GM13976 (cell line): ENCODE measurements at regions of chr11 and their contacts with region 1.

Region 1: DNA sequence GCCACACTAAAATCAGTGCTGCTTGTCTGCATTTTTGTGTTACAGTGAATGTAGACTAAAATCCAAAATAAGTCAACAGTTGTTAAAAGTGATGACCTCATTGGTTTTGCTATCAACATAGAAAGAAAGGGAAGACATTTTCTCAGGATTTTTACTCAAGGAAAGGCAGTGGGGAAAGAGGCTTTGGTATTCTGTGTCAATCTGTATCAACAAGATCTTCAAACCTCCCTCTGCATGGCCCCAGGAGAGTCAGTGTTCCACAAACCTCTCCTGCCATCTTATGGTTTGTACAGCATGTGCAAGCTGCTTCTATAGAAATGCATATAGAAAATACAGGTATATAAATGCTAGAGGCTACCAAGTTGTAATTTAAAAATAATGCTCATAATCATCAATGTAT is 13.8 kb upstream of the OR51M1 start:
- DNase-seq: peak; percentile 25
- CTCF ChIP-seq: peak; percentile 20

Region 2: GRCh38 chr11:4511282-4512245 is 858.2 kb before region 1 on chr11:
- in situ Hi-C with region 1: no loop called
- DNase-seq: no peak
- CTCF ChIP-seq: no peak

Region 3: DNA sequence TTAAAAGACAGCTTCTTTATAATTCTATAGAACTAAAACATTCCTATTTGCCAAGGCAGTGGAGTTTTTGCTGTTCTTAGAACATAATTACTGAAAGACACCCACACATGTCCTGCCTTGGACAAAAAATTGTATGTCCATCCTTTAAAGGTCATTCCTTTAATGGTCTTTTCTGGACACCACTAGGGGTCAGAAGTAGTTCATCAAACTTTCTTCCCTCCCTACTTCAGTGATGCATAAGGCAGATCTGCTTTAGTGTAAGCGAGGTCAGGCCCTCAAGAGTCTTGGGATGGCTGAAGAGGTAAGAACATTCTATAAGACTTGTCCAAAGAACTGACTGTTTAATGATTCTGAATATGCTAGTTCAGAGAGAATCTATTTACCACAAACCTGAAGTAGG is 165.0 kb before region 1 on chr11:
- in situ Hi-C with region 1: loop called (anchors 25 kb)
- DNase-seq: peak; percentile 40
- CTCF ChIP-seq: peak; percentile 37

Region 4: GRCh38 chr11:5324197-5324596 is 45.6 kb before region 1 on chr11 and contains the start of gene OR51B2:
- in situ Hi-C with region 1: no loop called
- DNase-seq: no peak
- CTCF ChIP-seq: no peak

Region 5: DNA sequence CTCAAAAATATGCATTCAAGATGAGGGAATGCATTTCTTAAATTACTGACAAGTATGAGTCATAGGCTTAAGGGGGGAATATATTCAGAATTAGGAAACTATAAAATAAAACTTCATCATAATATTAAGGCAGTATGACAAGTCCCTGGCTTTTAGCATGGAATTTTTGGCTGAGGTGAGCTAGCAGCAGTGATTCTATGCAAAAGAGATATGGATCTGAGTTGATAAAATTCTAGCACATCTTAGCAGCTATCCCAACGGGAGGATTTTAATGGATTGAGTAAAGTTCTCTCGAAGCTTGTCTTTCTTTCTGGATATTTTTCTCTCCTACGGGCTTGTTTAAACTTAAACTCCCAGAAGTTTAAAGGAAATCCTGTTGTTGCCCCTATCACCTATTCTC is 53.3 kb after region 1 on chr11:
- in situ Hi-C with region 1: no loop called
- DNase-seq: no peak
- CTCF ChIP-seq: no peak